Prostate gland (tissue), 2 donors: ENCODE measurements at regions of chr11 and their contacts with region 1.

Region 1: DNA sequence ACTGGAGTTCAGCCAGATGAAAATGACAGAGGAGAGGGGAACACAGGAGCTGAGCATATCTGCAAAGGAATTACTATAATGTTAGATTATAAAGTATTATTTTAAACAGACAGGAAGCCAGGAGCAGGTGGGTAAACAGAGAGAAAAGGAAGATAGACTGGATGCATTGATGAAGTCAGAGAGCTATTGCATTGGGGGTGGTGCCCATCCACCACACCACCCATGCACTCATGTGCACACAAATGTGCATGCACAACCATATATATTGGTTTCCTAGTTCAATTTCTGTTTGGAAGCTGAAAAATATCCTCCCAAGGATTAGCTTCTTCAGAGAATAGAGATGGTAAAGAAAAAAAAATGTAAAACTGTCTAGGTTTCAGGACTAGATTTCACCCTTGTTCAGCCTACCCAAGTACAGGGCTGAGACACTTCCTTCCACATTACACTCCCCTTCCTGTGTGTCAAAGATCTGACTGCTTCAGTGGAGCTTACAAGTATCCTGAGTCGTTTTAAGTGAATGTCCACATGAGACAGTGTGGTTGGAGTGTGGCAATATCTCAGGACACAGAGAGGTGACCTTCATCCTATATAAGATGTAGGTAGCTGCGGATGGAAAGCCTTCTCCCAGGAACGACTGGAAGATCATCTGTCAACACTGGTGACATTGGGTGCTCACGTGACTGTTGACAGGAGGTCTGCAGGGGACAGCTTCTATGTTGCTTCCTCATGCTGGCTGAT is 12.2 kb upstream of the SMPD1 start:
- DNase-seq: no peak
- H3K4me3 ChIP-seq: no peak overlapping the region
- H3K27ac ChIP-seq: no peak overlapping the region
- H3K4me1 ChIP-seq: no peaks in the 10 kb centered on the region
- H3K27me3 ChIP-seq: no peaks in the 10 kb centered on the region
- CTCF ChIP-seq: no peak
- POLR2A ChIP-seq: no peak

Region 2: GRCh38 chr11:6505577-6506240 is 127.6 kb after region 1 on chr11:
- intact Hi-C with region 1: loop called (anchors 5 kb)
- DNase-seq: peak; percentile 25
- H3K4me3 ChIP-seq: no peak overlapping the region
- H3K27ac ChIP-seq: no peak overlapping the region
- H3K4me1 ChIP-seq: no peaks in the 10 kb centered on the region
- H3K27me3 ChIP-seq: no peaks in the 10 kb centered on the region
- CTCF ChIP-seq: peak; percentile 56 to 74 (median 74)
- POLR2A ChIP-seq: no peak

Region 3: GRCh38 chr11:6703247-6704063 is 325.4 kb after region 1 on chr11:
- intact Hi-C with region 1: loop called (anchors 5 kb)
- DNase-seq: peak; percentile 48
- H3K4me3 ChIP-seq: no peak overlapping the region
- H3K27ac ChIP-seq: no peak overlapping the region
- H3K4me1 ChIP-seq: no peaks in the 10 kb centered on the region
- H3K27me3 ChIP-seq: no peaks in the 10 kb centered on the region
- CTCF ChIP-seq: peak in 3 of 4 experiments; percentile 46 to 63 (median 58)
- POLR2A ChIP-seq: no peak